ENCODE measurements at regions of chr2 and their contacts with region 1.

Region 1: GRCh38 chr2:16608661-16609643 is 56.7 kb downstream of the CYRIA start:
- DNase-seq: peak; percentile 81 to 91 (median 88)
- H3K4me3 ChIP-seq: peak overlapping the region; percentile 40 to 85 (median 71)
- H3K27ac ChIP-seq: no peak overlapping the region
- H3K4me1 ChIP-seq: peaks cover 0 to 4% (median 2%) of the 10 kb centered on the region in 4 experiments
- H3K27me3 ChIP-seq: no peaks in the 10 kb centered on the region

Region 2: GRCh38 chr2:15630121-15630977 is 978.6 kb before region 1 on chr2:
- CTCF ChIA-PET with region 1: interaction called, 14 read pairs
- POLR2A ChIA-PET with region 1: no interaction called
- DNase-seq: no peak
- H3K4me3 ChIP-seq: no peak overlapping the region
- H3K27ac ChIP-seq: no peak overlapping the region
- H3K4me1 ChIP-seq: no peaks in the 10 kb centered on the region
- H3K27me3 ChIP-seq: no peaks in the 10 kb centered on the region

Region 3: GRCh38 chr2:15636972-15637785 is 971.8 kb before region 1 on chr2:
- CTCF ChIA-PET with region 1: interaction called, 14 read pairs
- POLR2A ChIA-PET with region 1: no interaction called
- DNase-seq: peak; percentile 77 to 86 (median 79)
- H3K4me3 ChIP-seq: no peak overlapping the region
- H3K27ac ChIP-seq: no peak overlapping the region
- H3K4me1 ChIP-seq: peaks cover 0 to 15% (median 11%) of the 10 kb centered on the region in 4 experiments
- H3K27me3 ChIP-seq: no peaks in the 10 kb centered on the region

Region 4: DNA sequence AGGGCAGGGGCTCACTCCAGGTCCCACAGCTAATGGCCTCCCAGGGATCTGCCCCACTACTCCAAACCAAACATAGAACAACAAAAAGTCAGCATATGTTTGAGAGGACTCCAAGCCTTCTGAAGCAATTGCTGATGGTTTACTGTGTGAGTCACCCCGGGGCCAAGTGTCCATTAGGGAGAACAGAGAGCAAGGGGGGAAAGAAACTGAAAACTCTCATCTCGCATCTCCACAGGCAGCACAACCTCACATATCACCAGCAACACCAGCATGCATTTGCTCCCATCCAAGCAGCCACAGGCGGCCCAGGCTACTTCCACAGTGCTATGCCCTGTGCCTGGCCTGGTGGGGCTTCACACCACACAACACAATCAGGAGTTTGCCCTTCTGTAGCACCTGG is 17.5 kb after region 1 on chr2:
- CTCF ChIA-PET with region 1: interaction called, 25 read pairs
- POLR2A ChIA-PET with region 1: no interaction called
- DNase-seq: peak in 1 of 3 donors; percentile 36
- H3K4me3 ChIP-seq: no peak overlapping the region
- H3K27ac ChIP-seq: no peak overlapping the region
- H3K4me1 ChIP-seq: peaks cover 52 to 100% (median 63%) of the 10 kb centered on the region in 4 experiments
- H3K27me3 ChIP-seq: no peaks in the 10 kb centered on the region

Region 5: GRCh38 chr2:16691261-16691660 is 82.3 kb after region 1 on chr2:
- CTCF ChIA-PET with region 1: no interaction called
- POLR2A ChIA-PET with region 1: no interaction called
- DNase-seq: no peak
- H3K4me3 ChIP-seq: no peak overlapping the region
- H3K27ac ChIP-seq: no peak overlapping the region
- H3K4me1 ChIP-seq: no peaks in the 10 kb centered on the region
- H3K27me3 ChIP-seq: no peaks in the 10 kb centered on the region